Dendritic cell treated with granulocyte-macrophage colony-stimulating factor and Interleukin-4, amounts not matched to agents 40 ng/mL and 50 ng/mL, for 4 days (primary cell): ENCODE measurements at regions of chr13 and their contacts with region 1.

Region 1: DNA sequence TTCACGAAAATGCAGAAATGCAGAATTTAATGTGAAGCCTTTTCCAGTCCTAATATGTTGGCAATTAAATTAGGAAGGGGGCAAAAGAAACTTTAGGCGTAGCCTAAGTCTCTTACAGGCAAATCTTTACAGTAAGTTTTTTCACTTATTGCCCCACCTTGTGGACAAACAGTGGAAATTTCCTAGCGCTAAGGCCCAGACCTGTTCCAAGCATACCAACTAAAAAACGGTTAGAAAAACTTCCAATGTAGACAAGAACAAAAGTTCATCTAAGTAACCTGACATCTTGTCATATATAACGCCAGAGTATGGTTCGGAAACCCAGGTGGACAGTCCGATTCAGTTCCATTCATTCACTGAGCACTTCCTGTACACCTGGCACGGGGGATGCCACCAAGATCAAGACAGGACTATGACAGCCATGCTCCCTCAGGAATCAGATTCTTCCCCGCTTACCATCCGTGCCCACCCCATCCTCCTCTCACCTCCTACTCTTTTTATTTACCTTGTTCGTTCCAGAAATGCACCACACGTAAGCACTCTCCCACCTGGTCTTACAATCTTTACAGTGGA is 4.9 kb downstream of the ZAR1L start:
- H3K4me3 Mint-ChIP-seq: peak overlapping the region; percentile 48
- H3K27ac Mint-ChIP-seq: peak overlapping the region; percentile 27
- H3K4me1 Mint-ChIP-seq: peaks cover 20% of the 10 kb centered on the region
- H3K27me3 Mint-ChIP-seq: no peaks in the 10 kb centered on the region

Region 2: GRCh38 chr13:31824705-31825517 is 485.3 kb before region 1 on chr13:
- intact Hi-C with region 1: loop called (anchors 10 kb)
- H3K4me3 Mint-ChIP-seq: no peak overlapping the region
- H3K27ac Mint-ChIP-seq: no peak overlapping the region
- H3K4me1 Mint-ChIP-seq: peaks cover 25% of the 10 kb centered on the region
- H3K27me3 Mint-ChIP-seq: no peaks in the 10 kb centered on the region

Region 3: GRCh38 chr13:31909864-31910551 is 400.2 kb before region 1 on chr13:
- intact Hi-C with region 1: loop called (anchors 5 kb)
- H3K4me3 Mint-ChIP-seq: no peak overlapping the region
- H3K27ac Mint-ChIP-seq: peak overlapping the region; percentile 16
- H3K4me1 Mint-ChIP-seq: peaks cover 43% of the 10 kb centered on the region
- H3K27me3 Mint-ChIP-seq: no peaks in the 10 kb centered on the region

Region 4: DNA sequence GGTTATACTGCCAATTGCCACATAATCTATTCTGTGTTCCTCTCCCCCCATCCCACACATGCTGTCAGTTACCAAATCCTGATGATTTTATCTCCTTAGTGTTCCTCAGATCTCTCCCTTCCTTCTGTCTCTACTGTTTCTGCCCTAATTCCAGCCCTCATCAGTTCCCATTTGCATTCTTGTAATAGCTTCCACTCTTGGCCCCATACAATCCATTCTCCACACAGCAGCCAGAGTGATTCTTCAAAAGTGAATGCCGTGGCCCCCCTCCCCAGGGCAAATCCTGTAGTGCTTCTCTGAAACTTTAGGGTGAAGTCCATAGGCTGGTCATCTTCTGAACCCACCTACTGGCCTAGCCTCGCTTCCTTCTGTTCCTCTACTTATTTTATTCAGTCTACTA is 109.5 kb before region 1 on chr13:
- intact Hi-C with region 1: no loop called
- H3K4me3 Mint-ChIP-seq: no peak overlapping the region
- H3K27ac Mint-ChIP-seq: no peak overlapping the region
- H3K4me1 Mint-ChIP-seq: no peaks in the 10 kb centered on the region
- H3K27me3 Mint-ChIP-seq: no peaks in the 10 kb centered on the region

Region 5: DNA sequence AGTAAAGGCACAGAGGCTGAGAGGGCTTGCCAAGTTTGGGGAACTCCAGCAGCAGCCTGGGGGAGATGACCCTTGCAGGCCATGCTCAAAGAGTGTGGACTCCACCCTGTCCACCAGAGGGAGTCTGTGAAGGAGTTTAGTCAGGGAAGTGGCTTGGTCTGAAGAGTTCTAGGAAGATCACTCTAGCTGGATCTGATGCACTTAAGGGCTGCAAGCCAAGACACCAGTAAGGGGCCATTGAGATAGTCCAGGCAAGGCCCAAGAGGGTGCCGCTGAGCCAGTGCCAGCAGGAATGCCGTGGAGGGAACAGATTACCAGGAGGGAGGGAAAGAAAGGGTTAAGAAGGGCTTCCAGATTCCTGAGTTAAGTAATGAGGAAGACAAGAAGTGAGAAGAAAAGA is 63.8 kb before region 1 on chr13:
- intact Hi-C with region 1: loop called (anchors 5 kb)
- H3K4me3 Mint-ChIP-seq: no peak overlapping the region
- H3K27ac Mint-ChIP-seq: peak overlapping the region; percentile 45
- H3K4me1 Mint-ChIP-seq: peaks cover 8% of the 10 kb centered on the region
- H3K27me3 Mint-ChIP-seq: no peaks in the 10 kb centered on the region

Region 6: GRCh38 chr13:32354040-32354439 is 43.8 kb after region 1 on chr13:
- intact Hi-C with region 1: loop called (anchors 5 kb)
- H3K4me3 Mint-ChIP-seq: no peak overlapping the region
- H3K27ac Mint-ChIP-seq: no peak overlapping the region
- H3K4me1 Mint-ChIP-seq: no peaks in the 10 kb centered on the region
- H3K27me3 Mint-ChIP-seq: no peaks in the 10 kb centered on the region

Region 7: GRCh38 chr13:32984846-32985544 is 674.8 kb after region 1 on chr13:
- intact Hi-C with region 1: no loop called
- H3K4me3 Mint-ChIP-seq: no peak overlapping the region
- H3K27ac Mint-ChIP-seq: no peak overlapping the region
- H3K4me1 Mint-ChIP-seq: peaks cover 11% of the 10 kb centered on the region
- H3K27me3 Mint-ChIP-seq: no peaks in the 10 kb centered on the region